Left colon (tissue), 2 donors: ENCODE measurements at regions of chr11 and their contacts with region 1.

Region 1: DNA sequence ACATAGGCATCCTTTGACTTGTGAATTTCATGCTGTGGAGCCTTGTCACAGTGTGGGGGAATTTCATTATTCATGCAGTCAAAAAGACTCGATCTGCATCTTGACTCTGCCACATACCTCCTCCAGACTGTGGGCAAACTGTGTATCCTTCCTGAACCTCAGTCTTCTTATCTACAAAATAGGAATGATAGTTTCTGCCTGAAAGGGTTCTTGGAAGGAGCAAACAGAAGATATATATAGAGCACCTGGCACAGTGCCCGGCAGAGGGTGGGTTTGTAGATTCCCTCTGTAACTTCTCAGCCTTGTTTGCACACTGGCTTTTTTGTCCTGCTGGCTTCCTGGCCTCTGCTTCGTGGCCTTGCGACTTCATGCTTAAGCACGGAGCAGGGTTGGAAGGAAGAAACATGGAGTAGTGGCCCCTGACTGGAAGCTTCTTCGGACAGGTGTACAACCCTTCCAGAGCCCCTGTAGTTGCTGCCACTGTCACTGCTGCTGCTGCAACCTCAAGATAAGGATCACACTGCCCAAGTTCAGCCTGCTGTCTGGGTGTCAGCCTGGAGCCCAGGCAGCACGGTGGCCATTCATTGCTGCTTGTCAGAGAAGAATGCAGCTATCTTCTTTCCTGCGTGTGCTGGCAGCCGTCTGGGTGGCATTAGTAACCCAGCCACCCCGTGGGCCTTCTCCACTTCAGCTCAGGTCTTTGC is 106.4 kb downstream of the MICAL2 start:
- DNase-seq: peak in 1 of 2 donors; percentile 77
- ATAC-seq: peak; percentile 40

Region 2: GRCh38 chr11:12122083-12122482 is 94.7 kb before region 1 on chr11:
- intact Hi-C with region 1: no loop called
- DNase-seq: no peak
- ATAC-seq: peak; percentile 14

Region 3: DNA sequence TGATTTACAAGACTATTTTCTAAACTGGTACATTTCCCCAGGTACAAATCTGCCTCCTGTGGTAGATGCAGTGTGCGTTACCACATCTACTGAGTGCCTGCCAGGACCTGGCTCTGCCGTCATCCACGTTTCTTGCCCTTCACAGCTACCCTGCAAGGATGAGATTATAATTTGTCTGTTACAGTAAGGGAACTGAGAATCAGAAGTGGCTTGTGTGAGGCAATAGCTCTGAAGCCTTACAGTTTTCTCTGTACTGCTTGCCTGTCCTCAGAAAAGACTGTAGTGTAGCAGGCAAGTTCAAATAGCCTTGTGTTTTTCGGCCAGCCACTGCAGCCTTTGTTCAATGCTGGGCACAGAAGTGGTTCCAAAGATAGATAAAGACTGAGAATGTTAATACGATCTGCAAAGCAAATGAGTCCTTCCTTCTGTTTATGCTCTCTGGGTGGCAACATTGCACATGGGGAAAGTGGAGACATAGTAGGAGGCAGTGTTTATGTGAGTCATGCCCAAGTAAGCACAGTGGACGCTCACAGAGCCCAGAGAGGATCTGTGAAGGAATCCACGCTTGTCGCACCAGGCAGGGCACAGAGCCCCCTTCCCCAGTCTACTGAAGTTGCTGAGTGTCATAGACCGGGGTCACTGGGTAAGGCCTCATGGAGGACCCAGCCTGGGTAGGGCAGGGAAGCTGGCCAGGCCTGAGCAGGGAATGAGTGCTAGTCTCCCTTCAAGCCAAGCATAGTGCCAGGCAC is 57.3 kb before region 1 on chr11:
- intact Hi-C with region 1: loop called in 1 of 2 experiments (anchors 10 kb)
- DNase-seq: no peak
- ATAC-seq: no peak

Region 4: DNA sequence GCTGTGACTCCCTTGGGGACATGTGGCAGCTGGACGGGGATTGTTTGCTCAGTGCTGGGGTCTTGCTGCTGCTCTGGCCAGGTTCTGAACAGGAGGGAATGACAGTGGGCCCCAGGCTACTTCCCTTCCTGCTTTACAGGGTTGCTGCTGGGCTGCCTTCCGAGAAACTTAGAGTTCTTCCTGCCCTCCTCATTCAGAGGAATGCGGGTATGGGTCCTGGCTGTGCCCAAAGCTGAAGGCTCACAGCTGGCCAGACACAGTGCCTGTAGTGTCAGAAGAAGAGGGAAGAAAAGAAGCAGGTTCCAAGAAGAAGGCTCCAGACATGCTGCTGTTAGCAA is 52.2 kb after region 1 on chr11:
- intact Hi-C with region 1: no loop called
- DNase-seq: peak in 1 of 2 donors; percentile 65
- ATAC-seq: peak; percentile 35

Region 5: DNA sequence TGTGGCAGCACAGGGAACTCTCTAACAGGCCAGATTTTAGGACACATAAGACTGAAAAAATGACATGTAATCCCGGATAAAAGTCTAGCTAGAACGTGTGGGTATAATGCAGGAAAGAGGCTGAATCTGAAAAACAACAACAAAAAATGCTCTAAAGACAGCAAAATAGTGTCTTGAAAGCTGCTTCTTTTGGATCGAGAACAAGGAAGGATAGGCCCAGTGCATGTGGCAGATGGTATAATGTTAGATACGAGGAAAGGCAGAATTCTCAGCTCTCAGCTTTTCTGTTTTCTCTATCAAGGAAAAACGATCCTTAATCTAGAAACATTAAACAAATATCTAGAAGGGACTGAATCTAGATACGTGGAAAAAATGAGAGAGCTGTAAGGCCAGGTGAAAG is 126.7 kb after region 1 on chr11:
- intact Hi-C with region 1: no loop called
- DNase-seq: no peak
- ATAC-seq: no peak

Region 6: DNA sequence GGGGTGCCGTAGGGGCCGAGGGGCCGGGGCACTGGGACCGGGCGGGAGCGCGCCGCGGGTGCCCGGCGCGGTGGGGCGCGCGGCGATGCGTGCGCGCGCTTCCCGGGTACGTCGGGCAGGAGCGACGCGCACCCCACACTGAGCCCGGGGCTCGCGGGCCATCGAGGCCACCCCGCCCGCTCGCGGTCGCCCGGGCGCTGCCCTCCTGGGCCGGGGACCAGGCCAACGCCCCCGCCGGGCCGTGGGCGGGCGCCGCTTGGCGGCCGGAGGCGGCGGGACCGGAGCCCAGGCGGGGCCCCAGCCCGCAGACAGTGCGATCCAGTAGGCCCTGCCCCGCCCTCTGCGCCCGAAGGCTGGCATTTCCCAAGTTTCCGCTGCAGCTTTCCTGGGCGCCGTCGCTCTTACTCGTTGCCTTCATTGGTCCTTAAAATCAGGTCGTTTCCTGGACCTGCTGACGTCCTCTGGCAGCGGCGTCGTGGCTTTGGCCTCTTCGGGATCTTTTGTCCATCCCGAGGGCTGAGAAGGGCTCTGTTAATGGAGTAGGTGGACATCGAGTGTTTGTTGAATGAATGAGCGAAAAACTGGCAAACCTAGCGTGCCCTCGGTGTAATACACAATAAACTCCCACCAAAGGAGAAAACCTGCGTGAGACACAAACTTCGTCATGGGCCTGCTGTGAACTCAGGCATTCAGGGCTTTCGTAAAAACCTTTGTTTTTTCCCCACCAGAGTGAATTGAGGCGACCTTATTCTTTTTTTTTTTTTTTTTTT is 161.2 kb after region 1 on chr11:
- intact Hi-C with region 1: no loop called
- DNase-seq: peak; percentile 88 to 89
- ATAC-seq: peak; percentile 84